HCT116 (cell line): ENCODE measurements at regions of chr3 and their contacts with region 1.

Region 1: DNA sequence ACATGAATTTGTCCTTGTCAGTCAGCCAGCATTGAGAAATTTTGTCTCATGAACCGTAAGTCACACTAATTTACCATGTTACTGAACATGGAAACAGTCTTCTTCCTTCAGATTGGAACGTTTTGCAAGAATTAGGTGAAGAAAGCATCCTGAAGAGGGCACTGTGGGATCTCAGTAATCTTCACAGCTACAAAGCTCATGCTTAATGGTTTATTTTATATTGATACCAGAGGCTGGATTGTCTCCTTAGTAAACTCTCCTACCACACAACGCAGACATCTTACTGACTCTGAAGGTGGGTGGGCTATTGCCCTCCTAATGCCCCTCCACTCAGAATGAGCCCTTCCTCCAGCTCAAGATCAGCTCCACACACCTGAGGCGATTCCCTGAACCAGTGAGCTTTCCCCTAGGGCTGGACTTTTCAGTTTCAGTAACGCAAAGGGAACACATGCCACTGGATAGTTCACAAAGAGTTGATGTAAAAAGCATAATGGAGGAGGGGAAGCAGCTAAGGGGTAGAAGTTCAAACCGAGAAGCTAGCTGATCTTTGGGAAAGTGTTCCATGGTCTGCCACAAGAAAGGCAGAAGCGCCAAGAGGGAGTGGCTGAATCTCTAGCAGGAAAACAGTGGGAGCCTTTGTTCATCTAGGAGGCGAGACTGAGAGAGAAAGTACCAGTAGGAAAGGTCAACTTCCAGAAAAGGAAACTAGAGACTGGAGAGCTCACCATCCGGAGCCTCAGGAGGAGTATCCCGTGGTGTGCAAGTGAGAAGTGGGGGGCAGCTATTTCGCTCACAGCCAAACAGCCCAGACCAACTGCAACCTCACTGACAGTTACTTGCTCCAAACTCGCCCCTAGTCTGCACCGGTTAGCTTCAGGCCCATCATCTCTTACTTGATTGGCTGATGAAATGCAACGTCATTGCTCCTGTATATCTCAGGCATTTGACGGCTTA is at the start of gene SLC9C1:
- DNase-seq: peak; percentile 69
- ATAC-seq: peak; percentile 89
- H3K4me3 ChIP-seq: peak within 1 kb of the TSS; percentile 30 to 54
- H3K27ac ChIP-seq: peak within 1 kb of the TSS; percentile 50
- H3K4me1 ChIP-seq: peaks cover 7 to 21% of the 10 kb centered on the region in 2 experiments
- H3K27me3 ChIP-seq: no peaks in the 10 kb centered on the region
- CTCF ChIP-seq: peak; percentile 52 to 67 (median 57); a peak in 5 of 6 replicates
- POLR2A ChIP-seq: peak; percentile 54
- RAD21 ChIP-seq: peak; percentile 80
- total RNA-seq, gene SLC9C1: 0.79 TPM

Region 2: GRCh38 chr3:111859974-111860859 is 433.4 kb before region 1 on chr3:
- CTCF ChIA-PET with region 1: no interaction called
- POLR2A ChIA-PET with region 1: no interaction called
- RAD21 ChIA-PET with region 1: no interaction called
- intact Hi-C with region 1: no loop called
- DNase-seq: peak; percentile 82
- ATAC-seq: peak; percentile 56
- H3K4me3 ChIP-seq: peak overlapping the region; percentile 84 to 88
- H3K27ac ChIP-seq: peak overlapping the region; percentile 96
- H3K4me1 ChIP-seq: peaks cover 56 to 80% of the 10 kb centered on the region in 2 experiments
- H3K27me3 ChIP-seq: no peaks in the 10 kb centered on the region
- CTCF ChIP-seq: peak; percentile 36 to 50 (median 39); a peak in 5 of 6 replicates
- POLR2A ChIP-seq: peak; percentile 2
- RAD21 ChIP-seq: peak; percentile 69

Region 3: GRCh38 chr3:112437146-112438022 is 143.7 kb after region 1 on chr3:
- CTCF ChIA-PET with region 1: interaction called, 14 read pairs
- POLR2A ChIA-PET with region 1: no interaction called
- RAD21 ChIA-PET with region 1: interaction called, 3 to 4 read pairs
- intact Hi-C with region 1: no loop called
- DNase-seq: peak; percentile 19
- ATAC-seq: peak; percentile 98
- H3K4me3 ChIP-seq: no peak overlapping the region
- H3K27ac ChIP-seq: no peak overlapping the region
- H3K4me1 ChIP-seq: no peaks in the 10 kb centered on the region
- H3K27me3 ChIP-seq: no peaks in the 10 kb centered on the region
- CTCF ChIP-seq: peak; percentile 56 to 62 (median 61); a peak in 5 of 6 replicates
- POLR2A ChIP-seq: no peak
- RAD21 ChIP-seq: peak; percentile 71

Region 4: DNA sequence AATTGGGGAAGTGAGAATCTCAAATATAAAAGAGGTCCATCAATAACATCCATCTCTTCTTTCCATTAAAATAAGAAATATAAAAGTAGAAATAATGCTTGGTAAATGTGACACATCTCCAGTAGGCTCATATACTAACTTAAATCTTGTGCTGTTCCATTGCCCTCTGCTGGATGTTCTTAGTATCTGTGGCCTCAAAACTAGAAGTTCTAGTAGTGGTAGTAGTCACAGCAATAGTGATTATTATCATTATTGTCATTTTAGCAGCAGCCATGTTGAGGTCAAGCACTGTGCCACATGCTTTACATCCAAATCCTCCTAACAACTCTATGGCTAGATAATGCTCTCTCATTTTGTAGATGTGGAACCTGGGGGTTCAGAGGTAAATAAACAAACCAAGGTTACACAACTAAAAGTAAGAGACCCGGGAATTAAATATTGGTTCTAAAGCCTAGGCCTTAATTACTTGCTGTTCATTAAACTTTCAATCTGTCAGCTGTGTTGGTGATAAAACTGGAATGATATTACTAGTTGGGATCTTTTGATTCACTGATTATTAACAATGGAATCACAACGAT is 225.9 kb after region 1 on chr3:
- CTCF ChIA-PET with region 1: interaction called, 10 read pairs
- POLR2A ChIA-PET with region 1: interaction called, 3 read pairs
- RAD21 ChIA-PET with region 1: no interaction called
- intact Hi-C with region 1: loop called (anchors 1 kb)
- DNase-seq: peak; percentile 51
- ATAC-seq: peak; percentile 90
- H3K4me3 ChIP-seq: no peak overlapping the region
- H3K27ac ChIP-seq: no peak overlapping the region
- H3K4me1 ChIP-seq: no peaks in the 10 kb centered on the region
- H3K27me3 ChIP-seq: no peaks in the 10 kb centered on the region
- CTCF ChIP-seq: peak; percentile 68 to 76 (median 69)
- POLR2A ChIP-seq: no peak
- RAD21 ChIP-seq: peak; percentile 83

Region 5: DNA sequence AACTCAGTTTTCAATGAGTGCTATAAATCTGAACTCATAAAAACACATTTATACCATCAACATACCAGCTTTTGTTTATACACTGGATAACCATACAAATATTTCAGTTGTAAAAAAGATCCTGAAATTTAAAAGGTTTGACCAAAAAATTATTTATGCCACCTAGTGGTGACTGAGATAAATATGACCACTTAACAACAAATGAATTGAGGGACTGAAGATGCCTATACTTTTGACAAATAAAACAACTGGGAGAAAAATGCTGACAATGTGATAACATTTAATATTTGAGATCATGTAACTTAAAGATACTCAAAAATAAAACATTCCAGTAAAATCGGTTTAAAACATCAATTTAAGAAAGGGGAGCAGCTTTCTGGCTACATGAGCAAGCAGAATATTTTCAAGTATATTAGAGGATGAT is 237.7 kb after region 1 on chr3:
- CTCF ChIA-PET with region 1: interaction called, 11 read pairs
- POLR2A ChIA-PET with region 1: no interaction called
- RAD21 ChIA-PET with region 1: no interaction called
- intact Hi-C with region 1: loop called (anchors 1 kb)
- DNase-seq: peak; percentile 6
- ATAC-seq: no peak
- H3K4me3 ChIP-seq: no peak overlapping the region
- H3K27ac ChIP-seq: no peak overlapping the region
- H3K4me1 ChIP-seq: no peaks in the 10 kb centered on the region
- H3K27me3 ChIP-seq: no peaks in the 10 kb centered on the region
- CTCF ChIP-seq: peak in 2 of 3 experiments; percentile 31 to 73; a peak in 3 of 6 replicates
- POLR2A ChIP-seq: no peak
- RAD21 ChIP-seq: peak; percentile 35; the same call in 1 of the 2 replicates

Region 6: GRCh38 chr3:112546216-112546759 is 252.6 kb after region 1 on chr3:
- CTCF ChIA-PET with region 1: no interaction called
- POLR2A ChIA-PET with region 1: no interaction called
- RAD21 ChIA-PET with region 1: no interaction called
- intact Hi-C with region 1: no loop called
- DNase-seq: no peak
- ATAC-seq: no peak
- H3K4me3 ChIP-seq: no peak overlapping the region
- H3K27ac ChIP-seq: no peak overlapping the region
- H3K4me1 ChIP-seq: no peaks in the 10 kb centered on the region
- H3K27me3 ChIP-seq: no peaks in the 10 kb centered on the region
- CTCF ChIP-seq: no peak
- POLR2A ChIP-seq: no peak
- RAD21 ChIP-seq: no peak